H1 (cell line): ENCODE measurements at regions of chr17 and their contacts with region 1.

Region 1: GRCh38 chr17:51585514-51586104 is 325.3 kb downstream of the UTP18 start:
- DNase-seq: peak; percentile 9 to 62
- H3K4me3 ChIP-seq: no peak overlapping the region
- H3K27ac ChIP-seq: no peak overlapping the region
- H3K4me1 ChIP-seq: no peaks in the 10 kb centered on the region
- H3K27me3 ChIP-seq: no peaks in the 10 kb centered on the region
- CTCF ChIP-seq: peak; percentile 76 to 91 (median 89)
- EP300 ChIP-seq: no peak
- POLR2A ChIP-seq: no peak
- RAD21 ChIP-seq: peak; percentile 89 to 94

Region 2: DNA sequence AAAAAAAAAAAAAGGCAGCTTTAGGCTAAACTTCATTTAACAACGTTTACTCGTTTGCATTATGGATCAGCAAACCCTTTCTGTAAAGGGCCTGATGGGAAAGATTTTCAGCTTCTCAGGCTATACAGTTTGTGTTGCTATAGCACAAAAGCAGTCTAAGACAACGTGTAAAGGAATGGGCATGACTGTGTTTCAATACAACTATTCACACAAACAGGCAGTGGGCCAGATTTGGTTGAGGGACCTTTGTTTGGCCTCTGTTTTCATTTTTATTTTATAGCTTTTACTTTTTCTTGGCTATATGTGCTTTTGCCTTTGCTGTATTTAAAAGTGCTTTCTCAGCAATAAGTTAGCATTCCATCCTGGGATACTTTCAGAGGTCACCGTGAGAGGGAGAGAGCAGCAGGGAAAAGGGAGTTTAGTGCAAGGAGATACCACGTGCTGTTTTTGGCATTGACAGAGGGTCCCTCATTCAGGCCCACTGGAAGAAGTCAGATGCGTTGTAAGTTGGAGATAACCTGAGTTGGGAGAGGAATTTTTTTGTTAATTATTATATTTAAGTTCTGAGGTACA is 10.3 kb after region 1 on chr17:
- CTCF ChIA-PET with region 1: interaction called, 14 read pairs
- POLR2A ChIA-PET with region 1: no interaction called
- DNase-seq: no peak
- H3K4me3 ChIP-seq: no peak overlapping the region
- H3K27ac ChIP-seq: no peak overlapping the region
- H3K4me1 ChIP-seq: peaks cover 2 to 10% (median 4%) of the 10 kb centered on the region in 4 experiments; a peak in 6 of 7 replicates
- H3K27me3 ChIP-seq: peaks cover 0 to 3% (median 0%) of the 10 kb centered on the region in 4 experiments; a peak in 3 of 7 replicates
- CTCF ChIP-seq: no peak
- EP300 ChIP-seq: no peak
- POLR2A ChIP-seq: no peak
- RAD21 ChIP-seq: no peak

Region 3: GRCh38 chr17:51640108-51640622 is 54.6 kb after region 1 on chr17:
- CTCF ChIA-PET with region 1: interaction called, 30 read pairs
- POLR2A ChIA-PET with region 1: no interaction called
- DNase-seq: peak in 1 of 2 experiments; percentile 65
- H3K4me3 ChIP-seq: no peak overlapping the region
- H3K27ac ChIP-seq: no peak overlapping the region
- H3K4me1 ChIP-seq: peaks cover 0 to 3% (median 1%) of the 10 kb centered on the region in 4 experiments; a peak in 2 of 7 replicates
- H3K27me3 ChIP-seq: no peaks in the 10 kb centered on the region
- CTCF ChIP-seq: peak; percentile 36 to 85 (median 75)
- EP300 ChIP-seq: no peak
- POLR2A ChIP-seq: no peak
- RAD21 ChIP-seq: peak; percentile 63 to 73